Sciatic nerve (tissue), 2 donors: ENCODE measurements at regions of chr2 and their contacts with region 1.

Region 1: GRCh38 chr2:15628900-15629855 is 37.5 kb downstream of the DDX1 start:
- DNase-seq: no peak
- ATAC-seq: no peak

Region 2: DNA sequence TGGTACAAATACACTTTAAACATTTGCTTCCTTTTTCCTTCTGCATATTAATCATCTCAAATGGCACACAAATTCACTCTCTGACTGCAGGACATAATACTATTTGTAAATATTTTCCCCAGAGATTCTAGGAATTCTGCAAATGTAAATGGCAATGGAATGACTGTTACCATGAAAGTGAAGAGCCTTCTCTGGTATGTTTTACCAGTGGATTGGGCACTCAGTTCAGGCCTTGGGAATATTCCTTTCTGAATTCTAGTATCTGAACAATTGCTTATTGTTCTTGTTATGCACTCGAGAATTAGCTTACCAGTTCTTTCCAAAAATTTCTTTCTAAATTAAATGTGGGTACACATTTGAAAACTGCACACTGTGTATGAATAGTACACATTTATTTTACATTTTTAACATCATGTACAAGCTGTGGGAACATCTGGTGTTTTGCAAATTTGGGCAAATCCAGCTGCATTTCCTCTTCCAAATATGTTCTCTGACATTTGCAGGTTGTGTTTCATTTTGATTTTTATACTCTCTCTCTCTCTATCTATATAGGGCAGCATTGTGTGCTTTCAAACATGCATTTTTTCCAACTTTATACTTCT is 357.1 kb before region 1 on chr2:
- intact Hi-C with region 1: loop called (anchors 5 kb)
- DNase-seq: no peak
- ATAC-seq: no peak